Activated naive CD4-positive, alpha-beta T cell treated with anti-CD3 and anti-CD28 coated beads for 36 hours (primary cell): ENCODE measurements at regions of chr15 and their contacts with region 1.

Region 1: GRCh38 chr15:89129123-89129815 is 41.0 kb downstream of the ABHD2 start:
- DNase-seq: peak; percentile 71
- H3K4me3 Mint-ChIP-seq: no peak overlapping the region
- H3K27ac Mint-ChIP-seq: no peak overlapping the region
- H3K4me1 Mint-ChIP-seq: peaks cover 22% of the 10 kb centered on the region
- H3K27me3 Mint-ChIP-seq: no peaks in the 10 kb centered on the region

Region 2: DNA sequence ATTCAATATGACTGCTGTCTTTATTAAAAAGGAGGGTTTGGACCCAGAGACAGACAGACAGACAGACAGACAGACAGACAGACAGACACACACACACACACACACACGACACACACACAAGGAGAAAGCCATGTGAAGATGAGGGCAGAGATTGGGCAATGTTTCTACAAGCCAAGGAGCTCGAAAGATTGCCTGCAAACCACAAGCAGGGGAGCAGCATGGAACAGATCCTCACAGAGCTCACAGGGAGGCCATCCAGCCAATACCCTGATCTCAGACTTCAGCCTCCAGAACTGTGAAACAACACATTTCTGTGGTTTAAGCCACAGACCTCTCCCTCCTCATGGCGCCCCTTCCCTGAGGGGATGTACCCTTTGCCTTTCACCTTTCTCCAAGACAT is 76.8 kb before region 1 on chr15:
- CTCF ChIA-PET with region 1: interaction called, 118 read pairs
- intact Hi-C with region 1: loop called (anchors 1 kb)
- DNase-seq: no peak
- H3K4me3 Mint-ChIP-seq: no peak overlapping the region
- H3K27ac Mint-ChIP-seq: no peak overlapping the region
- H3K4me1 Mint-ChIP-seq: peaks cover 19% of the 10 kb centered on the region
- H3K27me3 Mint-ChIP-seq: no peaks in the 10 kb centered on the region

Region 3: DNA sequence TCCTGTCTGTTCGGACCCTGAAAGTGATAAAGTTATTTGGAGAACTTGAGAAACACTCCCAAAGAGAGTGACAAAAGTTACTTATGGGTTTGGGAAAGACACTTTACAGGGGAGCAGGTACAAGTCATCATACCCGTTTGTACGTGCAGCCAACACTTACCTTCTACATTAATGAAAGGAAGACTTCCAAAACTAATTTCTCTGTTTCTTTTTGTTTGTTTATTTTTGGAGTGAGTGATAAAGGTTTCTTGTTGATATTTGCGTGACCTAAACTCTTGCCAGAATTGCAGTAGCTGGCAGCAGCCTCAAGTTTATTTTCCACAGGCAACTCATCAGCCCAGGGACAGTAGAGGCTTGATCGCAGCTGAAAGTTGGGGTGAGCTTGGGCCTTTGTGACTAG is 32.6 kb before region 1 on chr15:
- CTCF ChIA-PET with region 1: interaction called, 22 read pairs
- intact Hi-C with region 1: no loop called
- DNase-seq: no peak
- H3K4me3 Mint-ChIP-seq: no peak overlapping the region
- H3K27ac Mint-ChIP-seq: no peak overlapping the region
- H3K4me1 Mint-ChIP-seq: peaks cover 45% of the 10 kb centered on the region
- H3K27me3 Mint-ChIP-seq: no peaks in the 10 kb centered on the region

Region 4: DNA sequence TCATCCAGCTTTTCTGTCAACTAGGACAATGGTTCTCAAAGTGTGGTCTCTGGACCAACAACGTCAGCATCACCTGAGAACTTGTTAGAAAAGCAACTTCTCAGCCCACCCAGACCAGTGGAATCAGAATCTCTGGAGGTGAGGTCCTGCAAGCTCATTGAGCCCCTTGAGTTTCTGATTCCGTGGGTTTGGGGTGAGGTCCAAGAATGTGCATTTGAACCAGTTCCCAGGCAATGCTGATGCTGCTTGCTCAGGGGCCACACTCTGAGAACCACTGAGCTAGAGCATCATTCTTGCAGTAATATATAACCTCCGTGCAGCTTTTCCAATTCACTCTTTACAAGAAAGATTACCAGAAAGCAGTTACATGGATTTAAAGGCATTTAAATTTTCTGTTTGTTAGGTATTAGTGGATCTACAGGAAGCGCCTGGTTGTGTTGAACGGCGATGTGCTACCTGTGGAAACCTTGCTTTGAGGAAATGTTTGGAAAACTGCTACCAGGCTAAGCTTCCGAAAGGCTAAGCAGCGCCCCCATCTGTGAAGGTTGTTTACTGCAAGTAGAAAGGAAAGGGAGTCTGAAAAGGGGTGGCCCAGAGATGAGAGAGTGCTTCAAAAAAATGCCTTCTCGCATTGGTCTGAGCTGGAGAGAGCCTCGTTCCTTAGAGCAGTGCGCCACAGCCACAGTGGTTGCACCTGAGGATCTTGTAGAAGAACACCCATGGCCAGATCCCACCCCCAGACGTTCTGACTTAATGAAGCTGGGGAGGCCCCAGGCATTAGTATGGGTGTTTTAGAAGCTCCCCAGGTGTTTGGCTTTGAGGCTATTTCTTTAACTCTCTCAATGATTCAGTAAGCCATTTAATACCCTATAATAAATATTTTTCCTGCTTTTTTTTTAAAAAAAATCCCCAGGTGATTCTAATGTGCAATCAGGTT is 42.1 kb after region 1 on chr15:
- CTCF ChIA-PET with region 1: interaction called, 13 read pairs
- intact Hi-C with region 1: loop called (anchors 2 kb)
- DNase-seq: peak; percentile 68
- H3K4me3 Mint-ChIP-seq: no peak overlapping the region
- H3K27ac Mint-ChIP-seq: no peak overlapping the region
- H3K4me1 Mint-ChIP-seq: peaks cover 33% of the 10 kb centered on the region
- H3K27me3 Mint-ChIP-seq: no peaks in the 10 kb centered on the region

Region 5: DNA sequence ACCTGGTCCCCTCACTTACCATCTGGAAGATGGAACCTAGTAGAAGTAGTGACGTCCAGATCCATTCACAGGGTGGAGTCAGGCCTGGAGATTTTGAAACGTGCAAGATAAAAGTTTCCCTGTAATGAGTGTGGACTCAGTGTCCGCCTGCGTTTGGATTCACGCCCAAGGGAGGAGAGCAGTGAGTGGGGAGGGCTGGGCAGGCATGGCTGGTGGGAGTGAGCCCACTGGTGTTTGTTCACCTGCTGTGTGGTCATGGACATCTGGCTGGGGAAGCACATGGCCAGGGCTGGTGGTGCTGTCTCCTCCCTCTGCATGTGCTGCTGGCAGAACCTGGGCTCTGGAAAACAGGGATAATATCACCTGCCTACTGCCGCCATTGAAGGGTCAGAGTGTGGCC is 55.1 kb after region 1 on chr15:
- CTCF ChIA-PET with region 1: no interaction called
- intact Hi-C with region 1: no loop called
- DNase-seq: no peak
- H3K4me3 Mint-ChIP-seq: no peak overlapping the region
- H3K27ac Mint-ChIP-seq: peak overlapping the region; percentile 3
- H3K4me1 Mint-ChIP-seq: peaks cover 35% of the 10 kb centered on the region
- H3K27me3 Mint-ChIP-seq: no peaks in the 10 kb centered on the region

Region 6: GRCh38 chr15:89243691-89244471 is 114.6 kb after region 1 on chr15 and contains the start of gene FANCI:
- CTCF ChIA-PET with region 1: no interaction called
- intact Hi-C with region 1: loop called (anchors 5 kb)
- DNase-seq: peak; percentile 99
- H3K4me3 Mint-ChIP-seq: peak within 1 kb of the TSS; percentile 98
- H3K27ac Mint-ChIP-seq: peak within 1 kb of the TSS; percentile 93
- H3K4me1 Mint-ChIP-seq: peaks cover 31% of the 10 kb centered on the region
- H3K27me3 Mint-ChIP-seq: no peaks in the 10 kb centered on the region
- total RNA-seq, gene FANCI: 268 to 283 TPM